Activated naive CD4-positive, alpha-beta T cell treated with anti-CD3 and anti-CD28 coated beads for 36 hours (primary cell): ENCODE measurements at regions of chr6 and their contacts with region 1.

Region 1: DNA sequence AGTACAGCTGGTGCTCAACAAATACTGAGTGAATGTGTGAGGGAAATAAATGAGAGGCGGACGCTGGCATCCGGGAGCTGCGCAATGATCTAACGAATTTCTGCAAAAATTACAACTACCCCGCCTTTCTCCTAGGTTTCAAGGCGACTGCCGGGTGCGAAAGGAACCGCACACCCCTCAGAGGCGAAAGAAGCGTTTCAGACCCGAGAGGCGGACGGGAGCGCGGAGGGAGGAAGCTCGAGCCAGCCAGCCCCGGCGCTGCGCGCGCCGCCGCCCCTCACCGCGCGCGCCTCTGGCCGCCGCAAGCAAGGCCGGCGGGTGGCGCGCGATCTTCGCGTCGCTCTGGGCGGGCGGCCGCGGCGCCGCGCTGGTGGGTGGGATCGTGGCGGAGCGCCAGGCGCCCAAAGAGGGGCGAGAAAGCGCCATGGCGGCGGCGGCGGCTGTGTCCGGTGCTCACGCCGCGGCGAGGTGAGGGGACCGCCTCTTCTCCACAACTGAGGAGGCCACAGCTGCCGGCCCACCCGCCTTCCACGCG is at the start of gene BLTP3A:
- DNase-seq: peak; percentile 74
- H3K4me3 Mint-ChIP-seq: peak within 1 kb of the TSS; percentile 90
- H3K27ac Mint-ChIP-seq: peak within 1 kb of the TSS; percentile 86
- H3K4me1 Mint-ChIP-seq: peaks cover 14% of the 10 kb centered on the region
- H3K27me3 Mint-ChIP-seq: no peaks in the 10 kb centered on the region
- total RNA-seq, gene BLTP3A: 17.0 to 17.9 TPM

Region 2: GRCh38 chr6:34556031-34556892 is 235.5 kb before region 1 on chr6 and contains the start of gene SPDEF:
- CTCF ChIA-PET with region 1: no interaction called
- intact Hi-C with region 1: no loop called
- DNase-seq: no peak
- H3K4me3 Mint-ChIP-seq: no peak within 1 kb of the TSS
- H3K27ac Mint-ChIP-seq: no peak within 1 kb of the TSS
- H3K4me1 Mint-ChIP-seq: peaks cover 14% of the 10 kb centered on the region
- H3K27me3 Mint-ChIP-seq: no peaks in the 10 kb centered on the region
- total RNA-seq, gene SPDEF: 0.24 to 0.35 TPM

Region 3: DNA sequence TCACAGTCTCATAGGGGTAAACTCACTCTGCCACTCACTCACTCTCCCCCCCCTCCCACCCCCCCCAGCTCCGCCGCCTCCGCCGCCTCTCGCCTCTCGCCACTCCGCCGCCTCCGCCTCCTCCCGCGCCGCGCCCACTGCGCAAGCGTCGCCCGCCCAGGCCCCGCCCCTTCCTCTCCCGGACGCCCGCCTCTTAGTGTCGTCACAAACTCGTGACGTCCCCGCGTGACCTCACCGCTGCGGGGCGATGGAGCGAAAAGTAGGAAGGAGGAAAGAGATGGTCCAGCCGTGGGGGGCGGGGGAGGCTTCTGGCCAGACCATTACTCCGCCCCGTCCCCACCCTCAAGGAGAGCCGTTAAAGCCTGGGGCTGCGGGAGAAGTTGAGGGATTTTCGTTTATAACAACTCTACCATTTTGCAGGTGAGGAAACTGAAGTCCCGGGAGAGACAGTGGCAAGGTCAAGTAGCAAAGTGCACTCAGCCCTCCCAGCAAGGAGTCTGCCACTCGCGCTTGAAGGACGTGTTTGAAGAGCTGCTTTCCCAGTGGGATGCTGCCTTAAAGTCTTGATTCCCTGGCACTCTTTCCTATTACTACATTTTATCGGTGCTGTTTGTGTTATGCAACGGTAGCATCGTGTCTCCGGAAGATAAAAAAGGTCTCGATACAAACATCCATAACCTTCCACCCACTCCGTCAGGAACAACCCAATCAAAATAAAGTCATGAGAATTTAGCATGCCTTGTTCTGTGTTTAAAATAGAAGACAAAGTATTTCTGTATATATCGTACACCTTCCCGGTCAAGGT is 94.8 kb before region 1 on chr6 and contains the start of gene ILRUN:
- CTCF ChIA-PET with region 1: no interaction called
- intact Hi-C with region 1: loop called (anchors 2 kb)
- DNase-seq: peak; percentile 98
- H3K4me3 Mint-ChIP-seq: peak within 1 kb of the TSS; percentile 100
- H3K27ac Mint-ChIP-seq: peak within 1 kb of the TSS; percentile 99
- H3K4me1 Mint-ChIP-seq: peaks cover 44% of the 10 kb centered on the region
- H3K27me3 Mint-ChIP-seq: no peaks in the 10 kb centered on the region
- total RNA-seq, gene ILRUN: 51.4 to 53.3 TPM

Region 4: DNA sequence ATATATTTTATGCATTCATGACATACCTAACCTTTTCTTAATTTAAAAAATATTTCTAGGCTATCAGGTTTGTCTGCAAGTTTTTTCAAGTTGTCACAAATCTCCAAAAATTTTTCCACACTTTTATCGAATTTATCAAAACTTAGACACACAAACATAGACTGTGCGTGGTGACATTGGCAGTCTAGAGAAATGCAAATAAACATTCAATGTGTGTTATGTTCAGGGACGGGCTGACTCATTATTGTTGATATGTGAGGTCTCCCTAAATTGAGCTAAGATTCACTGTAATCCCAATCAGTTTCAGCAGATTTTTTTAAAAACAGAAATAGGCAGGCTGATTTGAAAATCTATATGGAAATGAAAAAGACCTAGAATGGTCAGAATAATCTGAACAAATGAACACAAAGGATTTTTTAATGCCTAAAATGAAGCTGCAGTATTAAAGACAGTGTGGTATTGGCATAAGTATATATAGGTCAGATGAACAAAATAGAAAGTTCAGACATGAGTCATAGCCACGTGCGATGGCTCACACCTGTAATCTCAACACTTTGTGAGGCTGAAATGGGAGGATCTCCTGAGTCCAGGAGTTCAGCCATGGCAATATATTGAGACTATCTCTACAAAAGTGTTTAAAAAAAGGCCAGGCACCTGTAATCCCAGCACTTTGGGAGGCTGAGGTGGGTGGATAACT is 19.3 kb after region 1 on chr6:
- CTCF ChIA-PET with region 1: interaction called, 6 read pairs
- intact Hi-C with region 1: loop called (anchors 1 kb)
- DNase-seq: peak; percentile 69
- H3K4me3 Mint-ChIP-seq: no peak overlapping the region
- H3K27ac Mint-ChIP-seq: no peak overlapping the region
- H3K4me1 Mint-ChIP-seq: peaks cover 23% of the 10 kb centered on the region
- H3K27me3 Mint-ChIP-seq: no peaks in the 10 kb centered on the region

Region 5: GRCh38 chr6:34887753-34888513 is 96.2 kb after region 1 on chr6 and contains the start of gene TAF11:
- CTCF ChIA-PET with region 1: interaction called, 6 read pairs
- intact Hi-C with region 1: loop called (anchors 1 kb)
- DNase-seq: peak; percentile 97
- H3K4me3 Mint-ChIP-seq: peak within 1 kb of the TSS; percentile 99
- H3K27ac Mint-ChIP-seq: peak within 1 kb of the TSS; percentile 96
- H3K4me1 Mint-ChIP-seq: peaks cover 52% of the 10 kb centered on the region
- H3K27me3 Mint-ChIP-seq: no peaks in the 10 kb centered on the region
- total RNA-seq, gene TAF11: 27.3 to 28.5 TPM

Region 6: DNA sequence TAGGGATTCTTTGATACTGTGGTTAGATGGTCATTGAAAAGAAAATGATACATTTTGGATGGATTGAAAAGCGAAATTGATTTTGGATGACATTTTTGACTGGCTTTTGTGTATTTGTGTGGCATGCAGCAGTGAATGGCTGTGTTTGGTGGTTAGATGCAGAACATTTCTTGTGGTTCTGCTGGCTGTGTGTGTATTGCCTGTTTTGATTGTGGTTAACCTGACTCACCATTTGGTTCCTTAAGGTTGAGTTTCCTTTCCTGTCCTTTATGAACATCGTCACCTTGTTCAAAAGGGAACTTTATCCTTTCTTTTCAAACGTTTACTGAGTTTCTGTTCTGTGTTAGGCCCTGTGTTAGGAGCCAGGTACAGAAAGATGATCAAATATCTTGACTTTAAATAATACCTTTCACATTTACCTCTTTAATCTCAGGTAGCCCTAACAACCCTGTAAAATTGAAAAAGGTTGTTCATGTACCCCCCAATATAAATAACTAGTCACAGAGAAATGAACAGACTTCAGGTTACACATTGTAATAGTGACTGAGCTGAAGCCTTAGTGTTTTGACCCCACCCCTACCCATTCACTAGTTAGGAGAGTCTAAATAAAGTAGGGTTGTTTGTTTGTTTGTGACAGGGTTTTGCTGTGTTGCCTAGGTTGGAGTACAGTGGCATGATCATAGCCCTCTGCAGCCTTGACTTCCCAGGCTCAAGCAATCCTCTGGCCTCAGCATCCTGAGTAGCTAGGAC is 121.1 kb after region 1 on chr6:
- CTCF ChIA-PET with region 1: no interaction called
- intact Hi-C with region 1: loop called (anchors 2 kb)
- DNase-seq: peak; percentile 67
- H3K4me3 Mint-ChIP-seq: no peak overlapping the region
- H3K27ac Mint-ChIP-seq: peak overlapping the region; percentile 65
- H3K4me1 Mint-ChIP-seq: peaks cover 28% of the 10 kb centered on the region
- H3K27me3 Mint-ChIP-seq: no peaks in the 10 kb centered on the region

Region 7: DNA sequence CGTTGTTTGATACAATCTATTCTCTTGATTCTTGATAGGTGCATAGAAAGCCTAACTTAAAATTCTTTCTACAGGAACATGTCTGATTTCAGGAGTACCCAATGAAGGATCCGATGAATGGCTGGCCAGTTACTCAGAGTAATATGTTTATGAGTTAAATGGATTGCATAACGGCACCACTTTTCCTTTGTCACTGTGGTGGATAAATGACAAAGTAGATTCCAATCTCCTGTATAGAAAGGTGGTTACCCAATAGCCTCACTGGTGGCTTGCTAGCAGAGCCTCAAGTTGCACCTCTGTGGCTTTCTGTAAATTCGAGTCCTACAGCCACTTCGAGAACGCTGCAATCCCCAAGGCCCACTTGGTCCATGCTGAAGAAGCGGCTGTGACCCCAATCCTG is 1041.8 kb after region 1 on chr6:
- CTCF ChIA-PET with region 1: no interaction called
- intact Hi-C with region 1: no loop called
- DNase-seq: no peak
- H3K4me3 Mint-ChIP-seq: no peak overlapping the region
- H3K27ac Mint-ChIP-seq: no peak overlapping the region
- H3K4me1 Mint-ChIP-seq: no peaks in the 10 kb centered on the region
- H3K27me3 Mint-ChIP-seq: no peaks in the 10 kb centered on the region